ENCODE measurements at regions of chr19 and their contacts with region 1.

Region 1: GRCh38 chr19:2549701-2550191 is 73.8 kb downstream of the GADD45B start:
- DNase-seq: peak in 3 of 4 donors; percentile 47 to 85 (median 58)
- ATAC-seq: peak; percentile 41
- H3K4me3 ChIP-seq: no peak overlapping the region
- H3K27ac ChIP-seq: peak overlapping the region in 2 of 4 donors; percentile 29 to 62
- H3K4me1 ChIP-seq: peaks cover 5% of the 10 kb centered on the region
- H3K27me3 ChIP-seq: no peaks in the 10 kb centered on the region
- CTCF ChIP-seq: no peak
- POLR2A ChIP-seq: no peak

Region 2: DNA sequence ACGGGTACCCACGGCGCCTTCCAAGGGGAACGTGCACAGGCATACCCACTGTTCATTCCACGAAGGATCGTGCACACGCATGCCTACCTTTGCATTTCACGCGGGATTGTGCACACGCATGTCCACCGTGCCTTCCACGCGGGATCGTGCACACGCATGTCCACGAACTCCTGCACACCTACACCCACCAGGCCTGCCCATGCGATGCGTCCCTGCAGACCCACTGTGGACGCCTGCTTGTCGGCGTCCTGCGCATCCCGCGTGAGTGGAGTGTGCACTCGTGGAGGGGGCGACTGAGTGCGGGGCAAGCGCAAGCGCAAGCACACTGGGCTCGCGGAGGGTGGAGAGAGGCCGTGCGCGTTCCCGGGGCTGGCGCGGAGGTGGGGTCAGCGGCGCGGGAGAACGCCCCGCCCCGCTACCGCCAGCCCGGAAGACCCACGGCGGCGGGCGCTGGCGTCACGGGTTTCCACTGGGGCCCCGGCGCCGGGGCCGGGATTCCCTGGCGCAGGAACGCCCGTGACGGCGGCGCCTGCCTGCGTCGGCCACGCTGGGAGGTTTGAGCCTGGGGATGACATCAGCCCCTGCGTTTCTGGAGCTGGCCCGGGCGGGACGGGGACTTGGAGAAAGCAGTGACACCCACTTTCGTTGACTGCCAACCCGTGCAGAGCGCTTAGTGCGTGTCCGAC is 55.2 kb before region 1 on chr19:
- intact Hi-C with region 1: loop called (anchors 5 kb)
- DNase-seq: peak; percentile 80 to 84 (median 82)
- ATAC-seq: peak; percentile 75
- H3K4me3 ChIP-seq: peak overlapping the region in 1 of 2 donors; percentile 38
- H3K27ac ChIP-seq: peak overlapping the region; percentile 70 to 97 (median 90)
- H3K4me1 ChIP-seq: peaks cover 57% of the 10 kb centered on the region
- H3K27me3 ChIP-seq: no peaks in the 10 kb centered on the region
- CTCF ChIP-seq: no peak
- POLR2A ChIP-seq: peak; percentile 47 to 68 (median 61)

Measured in body of pancreas (tissue), 4 donors.